ENCODE measurements at regions of chr6 and their contacts with region 1.

Region 1: GRCh38 chr6:110398778-110399177 is 16.6 kb downstream of the DDO start:
- DNase-seq: peak; percentile 23
- H3K4me3 ChIP-seq: no peak overlapping the region
- H3K27ac ChIP-seq: no peak overlapping the region
- H3K4me1 ChIP-seq: peaks cover 11% of the 10 kb centered on the region
- H3K27me3 ChIP-seq: no peaks in the 10 kb centered on the region
- CTCF ChIP-seq: no peak

Region 2: GRCh38 chr6:110053395-110054240 is 345.2 kb before region 1 on chr6:
- CTCF ChIA-PET with region 1: no interaction called
- dilution Hi-C with region 1: no loop called
- in situ Hi-C with region 1: loop called (anchors 10 to 25 kb)
- intact Hi-C with region 1: no loop called
- DNase-seq: peak; percentile 29
- H3K4me3 ChIP-seq: no peak overlapping the region
- H3K27ac ChIP-seq: no peak overlapping the region
- H3K4me1 ChIP-seq: no peaks in the 10 kb centered on the region
- H3K27me3 ChIP-seq: peaks cover 7% of the 10 kb centered on the region
- CTCF ChIP-seq: peak; percentile 77 to 78